CD8-positive, alpha-beta T cell (primary cell): ENCODE measurements at regions of chr2 and their contacts with region 1.

Region 1: DNA sequence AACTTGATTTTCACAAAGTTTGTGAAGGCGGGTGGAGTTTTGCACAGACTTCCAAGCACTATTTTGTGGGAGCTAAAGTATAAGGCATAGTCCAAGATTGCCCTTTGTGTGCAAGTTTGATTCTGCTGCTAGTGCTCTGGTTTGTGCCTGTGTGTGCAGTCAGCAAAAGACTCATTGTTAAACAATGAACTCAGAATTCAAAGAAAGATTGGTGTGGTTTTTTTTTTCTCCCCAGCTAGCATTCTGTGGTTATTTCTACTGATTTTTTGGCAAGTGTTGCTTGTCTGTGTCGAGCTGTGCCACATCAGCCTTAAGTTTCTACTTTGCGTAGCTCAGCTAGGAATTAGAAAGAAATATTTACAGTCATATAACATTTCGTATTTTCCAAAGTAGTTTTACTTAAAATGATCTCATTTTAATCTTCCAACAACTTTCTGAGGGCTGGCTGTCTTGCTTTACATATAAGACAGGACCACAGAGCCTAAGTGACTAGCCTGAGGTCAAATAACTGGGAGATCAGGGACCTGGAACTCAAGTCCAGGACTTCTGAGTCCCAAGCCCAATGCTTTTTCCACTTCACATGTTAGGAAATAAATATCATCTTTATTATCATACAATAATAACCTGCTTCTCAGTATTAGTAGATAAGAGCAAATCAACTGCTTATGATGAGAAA is 69.8 kb downstream of the BABAM2 start:
- DNase-seq: peak in 3 of 9 experiments; percentile 22 to 59 (median 31)
- ATAC-seq: peak; percentile 85
- H3K4me3 ChIP-seq: no peak overlapping the region
- H3K4me3 Mint-ChIP-seq: peak overlapping the region; percentile 37
- H3K27ac ChIP-seq: no peak overlapping the region
- H3K27ac Mint-ChIP-seq: peak overlapping the region; percentile 33
- H3K4me1 ChIP-seq: peaks cover 27% of the 10 kb centered on the region
- H3K4me1 Mint-ChIP-seq: peaks cover 57% of the 10 kb centered on the region
- H3K27me3 ChIP-seq: no peaks in the 10 kb centered on the region
- H3K27me3 Mint-ChIP-seq: no peaks in the 10 kb centered on the region
- CTCF ChIP-seq: no peak

Region 2: DNA sequence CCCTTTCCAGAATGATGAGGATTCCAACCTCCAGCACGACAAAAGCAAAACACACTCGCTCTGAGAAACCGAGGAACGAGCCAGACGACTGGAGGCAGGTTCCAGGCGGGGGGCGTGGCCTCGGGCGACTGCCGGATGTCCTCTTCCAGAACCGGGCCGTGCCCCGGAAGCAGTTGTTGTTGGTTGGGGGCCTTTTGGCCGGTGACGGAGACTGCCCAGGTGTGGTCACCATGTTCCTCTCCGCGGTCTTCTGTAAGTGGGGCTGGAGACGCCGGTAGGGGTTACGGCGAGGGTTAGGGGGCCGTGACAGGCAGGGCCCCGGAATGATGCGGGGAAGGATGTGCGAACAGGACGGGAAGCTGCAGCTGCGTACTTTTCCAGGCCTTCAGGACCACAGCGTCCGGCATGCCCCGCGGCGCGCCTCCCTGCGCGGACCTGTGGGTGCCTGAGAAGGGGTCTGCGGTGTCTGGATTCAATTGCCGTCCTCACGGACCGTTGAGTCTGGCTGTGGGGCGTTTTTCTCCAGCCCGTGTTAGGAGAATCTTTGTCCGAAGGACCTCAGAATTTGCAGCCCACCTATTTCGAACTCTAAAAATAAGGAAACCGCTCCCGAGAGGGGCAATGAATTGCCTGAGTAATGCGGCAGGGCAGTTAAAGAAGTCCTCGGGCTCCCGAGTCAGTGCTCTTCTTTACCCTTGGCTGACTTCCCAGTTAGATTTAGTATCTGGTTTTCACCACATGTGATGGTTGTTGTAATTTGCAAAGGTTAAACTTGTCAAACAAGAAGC is 188.6 kb before region 1 on chr2 and contains the start of gene MRPL33:
- CTCF ChIA-PET with region 1: no interaction called
- POLR2A ChIA-PET with region 1: no interaction called
- intact Hi-C with region 1: loop called in 1 of 2 experiments (anchors 10 kb)
- DNase-seq: peak; percentile 82 to 94 (median 92)
- ATAC-seq: peak; percentile 89
- H3K4me3 ChIP-seq: peak within 1 kb of the TSS; percentile 93 to 99
- H3K4me3 Mint-ChIP-seq: peak within 1 kb of the TSS; percentile 100
- H3K27ac ChIP-seq: peak within 1 kb of the TSS; percentile 93 to 96
- H3K27ac Mint-ChIP-seq: peak within 1 kb of the TSS; percentile 100
- H3K4me1 ChIP-seq: peaks cover 27% of the 10 kb centered on the region
- H3K4me1 Mint-ChIP-seq: peaks cover 51% of the 10 kb centered on the region
- H3K27me3 ChIP-seq: no peaks in the 10 kb centered on the region
- H3K27me3 Mint-ChIP-seq: peaks cover 4% of the 10 kb centered on the region
- CTCF ChIP-seq: no peak
- total RNA-seq, gene MRPL33: 35.8 to 39.0 TPM

Region 3: DNA sequence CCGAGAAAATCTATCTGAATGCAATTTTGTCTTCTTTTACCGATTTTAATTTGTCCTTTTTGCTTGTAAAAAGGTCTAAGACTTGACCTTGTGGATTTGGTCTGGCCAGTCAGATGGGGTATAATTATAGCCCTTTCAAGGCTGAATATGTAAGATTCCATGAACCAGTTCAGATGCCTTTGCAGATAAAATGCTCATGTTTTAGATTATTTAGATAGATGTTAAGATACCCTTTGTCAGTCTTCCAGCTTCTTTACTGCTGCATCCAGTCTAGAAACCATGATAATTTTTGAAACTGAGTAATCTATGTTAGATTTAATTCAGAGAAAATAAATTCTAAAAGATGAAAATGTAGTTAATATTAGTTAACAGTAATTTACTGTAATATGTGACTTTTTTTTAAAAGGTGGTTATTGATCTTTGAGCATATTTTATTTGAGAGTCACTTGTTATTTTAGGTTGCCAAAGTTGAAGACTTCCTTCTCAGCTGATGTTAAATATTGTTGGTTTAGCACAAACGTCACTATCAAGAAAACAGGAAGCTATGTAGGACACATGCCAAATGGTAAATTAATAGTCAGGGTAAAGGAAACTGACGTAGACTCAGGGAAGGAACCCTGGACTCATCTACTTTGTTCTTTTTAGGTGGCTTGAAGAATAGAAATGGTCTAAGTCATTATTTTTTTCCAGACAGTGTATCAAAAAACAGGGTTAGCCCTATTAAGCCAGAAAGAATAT is 40.1 kb before region 1 on chr2:
- CTCF ChIA-PET with region 1: no interaction called
- POLR2A ChIA-PET with region 1: no interaction called
- intact Hi-C with region 1: loop called in 1 of 2 experiments (anchors 5 kb)
- DNase-seq: peak in 2 of 9 experiments; percentile 72 to 88
- ATAC-seq: peak; percentile 96
- H3K4me3 ChIP-seq: no peak overlapping the region
- H3K4me3 Mint-ChIP-seq: no peak overlapping the region
- H3K27ac ChIP-seq: peak overlapping the region in 1 of 2 experiments; percentile 78
- H3K27ac Mint-ChIP-seq: peak overlapping the region; percentile 41
- H3K4me1 ChIP-seq: peaks cover 9% of the 10 kb centered on the region
- H3K4me1 Mint-ChIP-seq: peaks cover 22% of the 10 kb centered on the region
- H3K27me3 ChIP-seq: no peaks in the 10 kb centered on the region
- H3K27me3 Mint-ChIP-seq: no peaks in the 10 kb centered on the region
- CTCF ChIP-seq: no peak

Region 4: GRCh38 chr2:27996156-27996922 is 36.0 kb after region 1 on chr2:
- CTCF ChIA-PET with region 1: no interaction called
- POLR2A ChIA-PET with region 1: no interaction called
- intact Hi-C with region 1: loop called in 1 of 2 experiments (anchors 5 kb)
- DNase-seq: no peak
- ATAC-seq: no peak
- H3K4me3 ChIP-seq: no peak overlapping the region
- H3K4me3 Mint-ChIP-seq: no peak overlapping the region
- H3K27ac ChIP-seq: no peak overlapping the region
- H3K27ac Mint-ChIP-seq: no peak overlapping the region
- H3K4me1 ChIP-seq: no peaks in the 10 kb centered on the region
- H3K4me1 Mint-ChIP-seq: peaks cover 7% of the 10 kb centered on the region
- H3K27me3 ChIP-seq: no peaks in the 10 kb centered on the region
- H3K27me3 Mint-ChIP-seq: no peaks in the 10 kb centered on the region
- CTCF ChIP-seq: no peak